SK-N-SH (cell line): ENCODE measurements at regions of chr2 and their contacts with region 1.

Region 1: GRCh38 chr2:38835015-38835601 is 40.6 kb downstream of the DHX57 start:
- DNase-seq: no peak
- H3K4me3 ChIP-seq: no peak overlapping the region
- H3K27ac ChIP-seq: no peak overlapping the region
- H3K4me1 ChIP-seq: no peaks in the 10 kb centered on the region
- H3K27me3 ChIP-seq: no peaks in the 10 kb centered on the region
- CTCF ChIP-seq: peak; percentile 70
- EP300 ChIP-seq: no peak
- RAD21 ChIP-seq: peak; percentile 54

Region 2: GRCh38 chr2:38778687-38779082 is 56.4 kb before region 1 on chr2:
- CTCF ChIA-PET with region 1: no interaction called
- POLR2A ChIA-PET with region 1: no interaction called
- DNase-seq: peak; percentile 61
- H3K4me3 ChIP-seq: peak overlapping the region; percentile 71 to 80
- H3K27ac ChIP-seq: peak overlapping the region; percentile 57 to 81
- H3K4me1 ChIP-seq: peaks cover 3 to 7% of the 10 kb centered on the region in 2 experiments; a peak in 1 of 4 replicates
- H3K27me3 ChIP-seq: no peaks in the 10 kb centered on the region
- CTCF ChIP-seq: no peak
- EP300 ChIP-seq: no peak
- RAD21 ChIP-seq: no peak

Region 3: GRCh38 chr2:38806015-38806732 is 28.9 kb before region 1 on chr2:
- CTCF ChIA-PET with region 1: interaction called, 12 read pairs
- POLR2A ChIA-PET with region 1: no interaction called
- DNase-seq: no peak
- H3K4me3 ChIP-seq: no peak overlapping the region
- H3K27ac ChIP-seq: no peak overlapping the region
- H3K4me1 ChIP-seq: no peaks in the 10 kb centered on the region
- H3K27me3 ChIP-seq: no peaks in the 10 kb centered on the region
- CTCF ChIP-seq: no peak
- EP300 ChIP-seq: no peak
- RAD21 ChIP-seq: no peak

Region 4: GRCh38 chr2:38850045-38850444 is 14.9 kb after region 1 on chr2:
- CTCF ChIA-PET with region 1: interaction called, 26 read pairs
- POLR2A ChIA-PET with region 1: no interaction called
- DNase-seq: no peak
- H3K4me3 ChIP-seq: no peak overlapping the region
- H3K27ac ChIP-seq: no peak overlapping the region
- H3K4me1 ChIP-seq: no peaks in the 10 kb centered on the region
- H3K27me3 ChIP-seq: no peaks in the 10 kb centered on the region
- CTCF ChIP-seq: no peak
- EP300 ChIP-seq: no peak
- RAD21 ChIP-seq: no peak